ENCODE measurements at regions of chr11 and their contacts with region 1.

Region 1: DNA sequence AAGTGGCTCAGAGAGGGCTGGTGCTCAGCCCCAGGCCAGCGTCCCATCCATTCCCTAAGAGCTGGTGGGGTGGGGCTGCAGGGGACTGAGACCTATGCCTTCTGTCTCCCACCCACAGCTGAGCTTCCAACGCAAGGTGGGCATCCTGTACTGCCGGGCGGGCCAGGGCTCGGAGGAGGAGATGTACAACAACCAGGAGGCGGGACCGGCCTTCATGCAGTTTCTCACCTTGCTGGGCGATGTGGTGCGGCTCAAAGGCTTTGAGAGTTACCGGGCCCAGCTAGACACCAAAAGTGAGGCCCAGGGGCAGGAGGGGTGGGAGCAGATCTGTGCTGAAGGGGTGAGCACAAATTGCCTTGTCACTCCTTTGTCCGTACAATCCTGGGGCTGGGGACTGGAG is 6.9 kb downstream of the SIPA1 start:
- DNase-seq: no peak
- H3K4me3 ChIP-seq: no peak overlapping the region
- H3K27ac ChIP-seq: no peak overlapping the region
- H3K4me1 ChIP-seq: peaks cover 24% of the 10 kb centered on the region
- CTCF ChIP-seq: no peak

Region 2: GRCh38 chr11:65859200-65859811 is 214.5 kb after region 1 on chr11:
- CTCF ChIA-PET with region 1: no interaction called
- POLR2A ChIA-PET with region 1: no interaction called
- intact Hi-C with region 1: no loop called
- DNase-seq: peak; percentile 99
- H3K4me3 ChIP-seq: peak overlapping the region; percentile 99
- H3K27ac ChIP-seq: peak overlapping the region; percentile 93
- H3K4me1 ChIP-seq: peaks cover 31% of the 10 kb centered on the region
- CTCF ChIP-seq: 0 out of 2 replicates have a peak, but pooled peaks have one; percentile 26

Region 3: DNA sequence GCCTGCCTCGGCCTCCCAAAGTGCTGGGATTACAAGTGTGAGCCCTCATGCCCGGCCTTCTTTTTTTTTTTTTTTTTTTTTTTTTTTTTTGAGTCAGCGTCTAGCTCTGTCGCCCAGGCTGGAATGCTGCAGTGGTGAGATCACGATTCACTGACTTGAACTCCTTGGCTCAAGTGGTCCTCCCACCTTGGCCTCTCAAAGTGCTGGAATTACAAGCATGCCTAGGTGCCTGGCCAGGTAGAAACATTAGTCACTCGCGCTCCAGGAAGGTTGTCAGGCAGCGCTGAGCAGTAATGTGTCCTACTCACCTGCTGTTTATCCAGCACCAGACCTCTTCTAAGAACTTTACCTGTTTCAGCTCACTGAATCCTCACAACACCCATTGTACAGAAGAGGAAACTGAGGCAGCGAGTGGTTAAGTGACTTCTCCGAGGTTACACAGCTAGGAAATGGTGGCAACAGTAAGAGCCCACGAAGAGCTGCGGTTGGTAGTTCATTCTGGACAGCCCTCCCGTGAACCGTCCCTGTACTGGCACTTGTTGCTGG is 366.5 kb after region 1 on chr11:
- CTCF ChIA-PET with region 1: interaction called, 10 read pairs
- POLR2A ChIA-PET with region 1: no interaction called
- intact Hi-C with region 1: no loop called
- DNase-seq: no peak
- H3K4me3 ChIP-seq: no peak overlapping the region
- H3K27ac ChIP-seq: no peak overlapping the region
- H3K4me1 ChIP-seq: no peaks in the 10 kb centered on the region
- CTCF ChIP-seq: no peak

Region 4: GRCh38 chr11:66467756-66468155 is 822.9 kb after region 1 on chr11:
- CTCF ChIA-PET with region 1: no interaction called
- POLR2A ChIA-PET with region 1: no interaction called
- intact Hi-C with region 1: no loop called
- DNase-seq: no peak
- H3K4me3 ChIP-seq: peak overlapping the region; percentile 69
- H3K27ac ChIP-seq: no peak overlapping the region
- H3K4me1 ChIP-seq: peaks cover 27% of the 10 kb centered on the region
- CTCF ChIP-seq: no peak

Measured in OCI-LY7 (cell line).